ENCODE measurements at regions of chr17 and their contacts with region 1.

Region 1: DNA sequence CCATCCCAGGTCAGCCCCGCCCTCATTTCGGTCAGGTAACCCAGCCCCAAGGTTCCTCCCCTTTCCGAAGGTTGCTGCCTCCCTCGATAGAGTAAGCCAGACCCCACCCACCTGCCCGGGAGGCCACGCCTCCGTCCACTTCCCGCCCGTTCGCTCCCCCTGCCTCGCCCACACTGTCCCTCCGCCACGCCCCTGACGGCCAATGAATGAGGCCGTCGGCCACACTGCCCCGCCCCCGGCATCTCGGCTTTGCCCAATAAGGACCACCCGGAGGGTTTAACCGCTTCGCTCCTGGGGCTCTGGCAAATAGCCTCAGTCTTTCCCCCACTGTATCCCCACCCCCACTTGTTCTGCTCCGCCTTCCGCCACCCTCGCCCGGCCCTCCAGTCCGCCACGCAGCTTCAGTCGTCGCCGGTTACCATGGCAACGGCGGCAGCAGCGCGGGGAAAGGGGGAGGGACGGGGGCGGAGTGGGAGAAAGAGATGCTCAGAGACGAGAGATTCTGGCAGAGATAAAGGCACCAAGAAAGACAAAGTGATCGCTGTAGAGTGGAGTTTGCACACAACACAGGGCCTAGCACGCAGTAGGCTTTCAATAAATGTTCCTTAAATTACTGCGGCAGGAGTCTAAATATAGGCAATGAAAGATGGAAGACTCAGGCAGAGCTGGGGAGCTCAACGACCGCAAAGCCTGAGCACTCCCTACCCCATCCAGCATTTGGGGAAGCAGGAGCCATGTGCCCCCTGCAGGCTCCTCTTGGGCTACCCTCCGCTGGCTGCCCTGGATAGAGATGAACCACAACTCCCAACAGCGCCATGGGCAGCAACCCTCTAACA is 5.1 kb downstream of the DLG4 start:
- DNase-seq: peak; percentile 100
- H3K4me3 Mint-ChIP-seq: peak overlapping the region; percentile 85
- H3K27ac Mint-ChIP-seq: peak overlapping the region; percentile 89
- H3K4me1 Mint-ChIP-seq: peaks cover 52% of the 10 kb centered on the region
- H3K27me3 Mint-ChIP-seq: peaks cover 7% of the 10 kb centered on the region

Region 2: DNA sequence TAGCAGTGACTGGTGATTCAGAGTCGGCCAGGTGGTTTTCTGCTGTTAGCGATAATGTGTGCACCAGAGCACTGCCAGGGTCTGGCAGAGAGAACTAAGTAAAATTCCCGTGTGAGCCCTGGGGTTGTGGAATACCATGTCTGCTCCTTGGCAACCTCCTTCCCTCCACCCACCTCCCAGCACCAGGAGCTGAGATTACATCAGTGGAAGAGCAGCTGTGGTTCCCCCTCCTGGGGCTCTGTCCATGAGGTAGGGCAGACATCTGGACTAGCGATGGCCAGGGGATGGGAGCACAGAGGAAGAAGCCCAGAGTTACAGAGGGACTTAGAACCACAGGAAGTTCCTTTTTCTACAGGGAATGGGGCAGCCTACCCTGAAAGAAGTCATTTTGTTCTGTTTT is 150.3 kb before region 1 on chr17:
- CTCF ChIA-PET with region 1: no interaction called
- POLR2A ChIA-PET with region 1: no interaction called
- intact Hi-C with region 1: no loop called
- DNase-seq: no peak
- H3K4me3 Mint-ChIP-seq: no peak overlapping the region
- H3K27ac Mint-ChIP-seq: no peak overlapping the region
- H3K4me1 Mint-ChIP-seq: peaks cover 16% of the 10 kb centered on the region
- H3K27me3 Mint-ChIP-seq: peaks cover 17% of the 10 kb centered on the region

Region 3: DNA sequence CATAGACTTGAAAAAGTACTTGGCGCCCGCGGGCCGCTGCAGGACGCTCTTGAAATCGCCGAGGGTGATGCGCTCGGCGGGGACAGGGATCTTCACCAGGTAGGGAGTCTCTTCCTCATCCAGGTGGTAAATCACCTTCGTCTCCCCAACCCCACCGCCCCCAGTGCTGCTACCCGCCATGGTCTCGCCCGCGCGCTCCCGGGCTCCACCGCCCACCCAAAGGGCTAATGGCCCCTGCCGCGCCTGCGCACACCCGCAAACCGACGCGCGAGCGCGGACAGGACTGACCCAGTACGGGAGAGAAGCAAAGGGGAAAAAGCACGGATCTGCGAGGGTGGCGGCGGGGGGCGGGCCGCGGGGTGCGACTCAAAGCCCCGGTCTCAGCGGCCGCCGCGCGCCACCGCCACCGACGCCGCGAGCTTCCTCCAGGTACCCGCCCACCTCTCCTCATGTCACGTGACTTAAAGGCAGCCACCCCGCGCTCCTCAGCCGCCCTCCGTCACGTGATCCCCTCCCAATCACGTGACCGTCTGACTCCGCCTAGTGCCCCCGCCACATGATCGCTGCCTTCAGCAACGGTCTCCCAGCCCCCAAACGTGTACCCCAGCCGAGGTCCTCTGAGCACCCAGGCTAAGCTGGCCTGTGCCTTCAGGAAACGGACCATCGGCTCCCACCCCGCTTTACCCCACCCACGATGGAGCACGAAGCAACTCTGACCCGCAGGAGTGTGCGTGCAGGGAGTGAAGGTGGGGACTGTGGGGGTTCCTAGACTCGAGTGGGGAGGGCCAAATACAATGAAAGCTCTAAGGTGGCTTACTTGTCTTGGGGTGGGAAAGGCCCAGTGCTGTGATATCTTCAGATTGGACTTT is 19.8 kb after region 1 on chr17 and contains the start of gene DVL2:
- CTCF ChIA-PET with region 1: interaction called, 34 read pairs
- POLR2A ChIA-PET with region 1: interaction called, 33 read pairs
- intact Hi-C with region 1: loop called (anchors 1 kb)
- DNase-seq: peak; percentile 96
- H3K4me3 Mint-ChIP-seq: peak within 1 kb of the TSS; percentile 97
- H3K27ac Mint-ChIP-seq: peak within 1 kb of the TSS; percentile 90
- H3K4me1 Mint-ChIP-seq: peaks cover 48% of the 10 kb centered on the region
- H3K27me3 Mint-ChIP-seq: peaks cover 2% of the 10 kb centered on the region
- total RNA-seq, gene DVL2: 44.7 to 48.2 TPM

Region 4: GRCh38 chr17:7239091-7240027 is 24.8 kb after region 1 on chr17 and contains the start of gene PHF23:
- CTCF ChIA-PET with region 1: interaction called, 34 read pairs
- POLR2A ChIA-PET with region 1: interaction called, 33 read pairs
- intact Hi-C with region 1: loop called (anchors 1 kb)
- DNase-seq: peak; percentile 99
- H3K4me3 Mint-ChIP-seq: peak within 1 kb of the TSS; percentile 94
- H3K27ac Mint-ChIP-seq: peak within 1 kb of the TSS; percentile 97
- H3K4me1 Mint-ChIP-seq: peaks cover 59% of the 10 kb centered on the region
- H3K27me3 Mint-ChIP-seq: peaks cover 4% of the 10 kb centered on the region
- total RNA-seq, gene PHF23: 24.0 to 28.7 TPM